ENCODE measurements at regions of chr11 and their contacts with region 1.

Region 1: DNA sequence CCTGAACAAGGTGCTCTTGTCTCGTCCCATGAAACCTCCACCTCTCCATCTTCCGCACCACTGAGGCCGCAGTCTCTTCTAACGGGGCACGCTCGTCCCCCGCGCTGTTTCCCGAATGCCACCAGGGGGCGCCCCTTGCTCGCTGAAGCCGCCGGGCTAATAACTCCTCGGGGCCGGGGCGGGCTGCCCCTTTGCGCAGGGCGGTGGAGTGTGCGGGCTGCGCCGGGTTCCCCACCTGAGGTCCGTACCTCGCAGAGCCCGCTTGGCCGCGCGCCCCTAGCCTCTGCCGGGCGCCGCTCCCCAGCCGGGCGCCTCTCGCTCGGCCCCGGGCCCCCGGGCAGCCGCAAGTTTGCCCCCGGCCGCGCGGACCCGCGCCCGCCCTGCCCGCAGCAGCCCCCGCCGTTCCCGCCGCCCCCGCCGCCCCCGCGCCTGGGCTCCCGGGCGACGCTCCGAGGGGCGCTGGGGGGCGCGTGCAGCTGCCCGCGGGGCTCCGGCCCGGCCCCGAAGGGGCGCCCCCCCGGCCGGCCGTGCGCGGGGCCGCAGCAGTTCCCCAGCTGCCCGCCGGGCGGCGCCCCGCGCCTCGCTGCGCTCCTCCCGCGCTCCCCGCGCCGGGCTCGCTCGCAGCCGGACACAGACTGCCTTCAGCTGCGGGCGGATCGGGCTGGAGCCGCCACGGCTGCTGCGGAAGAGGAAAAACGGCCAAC is at the start of gene GRIK4:
- DNase-seq: peak; percentile 77 to 82
- H3K4me3 ChIP-seq: peak within 1 kb of the TSS; percentile 39 to 48
- H3K27ac ChIP-seq: no peak within 1 kb of the TSS
- H3K4me1 ChIP-seq: peaks cover 0 to 12% (median 5%) of the 10 kb centered on the region in 4 donors
- H3K27me3 ChIP-seq: peaks cover 0 to 72% of the 10 kb centered on the region in 2 donors
- CTCF ChIP-seq: peak; percentile 94 to 95

Region 2: GRCh38 chr11:120682866-120683265 is 171.6 kb after region 1 on chr11:
- intact Hi-C with region 1: loop called (anchors 5 kb)
- DNase-seq: no peak
- H3K4me3 ChIP-seq: no peak overlapping the region
- H3K27ac ChIP-seq: no peak overlapping the region
- H3K4me1 ChIP-seq: no peaks in the 10 kb centered on the region
- H3K27me3 ChIP-seq: peaks cover 0 to 35% of the 10 kb centered on the region in 2 donors
- CTCF ChIP-seq: no peak

Region 3: GRCh38 chr11:120784566-120785251 is 273.4 kb after region 1 on chr11:
- intact Hi-C with region 1: loop called (anchors 10 kb)
- DNase-seq: no peak
- H3K4me3 ChIP-seq: no peak overlapping the region
- H3K27ac ChIP-seq: no peak overlapping the region
- H3K4me1 ChIP-seq: no peaks in the 10 kb centered on the region
- H3K27me3 ChIP-seq: peaks cover 0 to 43% of the 10 kb centered on the region in 2 donors
- CTCF ChIP-seq: no peak

Region 4: DNA sequence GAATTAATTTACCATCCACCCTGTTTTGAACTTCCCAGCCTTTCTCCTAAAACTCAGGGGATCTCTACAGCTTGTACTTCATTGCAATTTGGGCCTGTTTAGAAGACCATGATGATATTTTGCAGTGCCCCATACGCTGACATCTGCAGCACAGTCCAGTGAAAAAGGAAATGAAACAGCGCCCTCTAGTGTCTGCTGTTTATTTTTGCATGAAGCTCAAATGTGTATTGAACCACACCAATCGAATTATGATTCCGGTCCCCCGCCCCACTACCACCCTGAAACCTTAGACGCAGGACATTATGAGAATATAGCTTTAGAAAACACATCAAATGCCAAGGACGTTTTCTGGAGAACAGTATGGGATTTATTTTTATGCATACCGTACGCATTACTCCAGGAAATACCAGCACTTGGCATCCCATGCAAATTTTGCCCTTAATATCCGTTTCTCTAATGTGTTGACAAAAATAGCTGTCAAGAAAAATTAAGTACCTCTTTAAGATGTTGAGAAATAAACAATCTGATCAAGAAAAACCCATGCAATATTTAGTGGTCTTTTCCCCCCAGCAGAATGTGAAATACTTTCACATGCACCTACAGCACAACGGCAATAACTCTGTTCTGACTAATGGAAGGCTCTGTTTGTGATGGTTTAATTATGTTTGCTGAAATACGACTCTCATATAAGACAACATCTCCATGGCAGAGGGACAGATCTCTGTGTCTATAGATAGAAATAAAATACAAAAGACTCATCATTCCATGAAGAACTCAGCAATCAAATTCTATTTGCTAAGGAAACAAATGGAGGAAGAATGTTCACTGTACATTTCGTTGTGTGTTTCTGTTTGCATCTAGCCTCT is 683.7 kb after region 1 on chr11:
- intact Hi-C with region 1: loop called (anchors 10 kb)
- DNase-seq: peak in 1 of 2 donors; percentile 41
- H3K4me3 ChIP-seq: no peak overlapping the region
- H3K27ac ChIP-seq: no peak overlapping the region
- H3K4me1 ChIP-seq: peaks cover 0 to 5% (median 0%) of the 10 kb centered on the region in 4 donors
- H3K27me3 ChIP-seq: peaks cover 0 to 9% of the 10 kb centered on the region in 2 donors
- CTCF ChIP-seq: peak; percentile 58 to 77